T-cell (primary cell): ENCODE measurements at regions of chr1 and their contacts with region 1.

Region 1: DNA sequence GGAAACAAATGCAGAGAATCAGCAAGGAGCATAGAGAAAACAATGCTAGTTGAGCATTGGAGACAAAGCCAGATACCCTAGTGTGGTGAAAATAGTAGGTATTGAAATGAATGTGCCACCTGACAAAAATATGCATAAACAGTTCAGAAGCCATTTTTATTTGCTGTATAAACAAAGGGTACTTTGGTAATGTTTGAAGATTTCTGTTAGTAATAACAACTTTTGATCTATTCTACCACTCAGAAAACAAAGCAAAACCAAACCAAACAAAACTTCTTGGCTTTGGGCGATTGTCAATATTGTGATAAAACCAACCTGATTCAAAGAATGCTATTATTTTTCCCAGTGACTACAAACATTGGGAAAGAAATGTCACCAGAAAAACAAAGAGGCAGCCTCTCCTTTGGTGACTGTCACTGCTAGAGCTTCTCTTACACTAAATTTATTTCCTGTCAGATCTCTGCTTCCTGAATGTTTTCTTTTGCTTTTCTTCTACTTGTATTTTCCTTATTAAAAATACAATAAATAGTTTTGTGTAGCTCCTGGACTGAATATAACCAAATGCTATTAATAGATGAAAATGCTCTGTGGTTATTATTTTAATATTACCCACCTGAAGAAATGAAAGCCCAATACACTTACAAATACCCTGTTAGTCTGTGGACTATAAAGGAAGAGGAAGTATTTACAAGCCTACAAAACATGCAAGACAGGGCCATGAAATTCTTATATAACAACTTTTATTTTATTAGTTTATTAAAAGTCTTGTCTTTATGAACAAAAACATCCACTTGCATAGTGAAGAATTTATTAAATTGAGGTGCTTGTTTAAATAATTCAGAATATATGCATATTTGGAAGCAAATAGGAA is 5.7 kb downstream of the ATP6V1G3 start:
- DNase-seq: no peak
- ATAC-seq: peak; percentile 40 to 67 (median 62)
- H3K4me3 ChIP-seq: no peak overlapping the region
- H3K4me3 Mint-ChIP-seq: peak overlapping the region; percentile 45 to 59 (median 55)
- H3K27ac ChIP-seq: peak overlapping the region; percentile 70
- H3K27ac Mint-ChIP-seq: peak overlapping the region; percentile 86 to 97
- H3K4me1 ChIP-seq: peaks cover 8 to 57% of the 10 kb centered on the region in 2 experiments
- H3K4me1 Mint-ChIP-seq: peaks cover 76 to 95% (median 78%) of the 10 kb centered on the region in 3 donors
- H3K27me3 ChIP-seq: no peaks in the 10 kb centered on the region
- H3K27me3 Mint-ChIP-seq: no peaks in the 10 kb centered on the region

Region 2: GRCh38 chr1:198373376-198373775 is 161.4 kb before region 1 on chr1:
- CTCF ChIA-PET with region 1: no interaction called
- POLR2A ChIA-PET with region 1: no interaction called
- DNase-seq: no peak
- ATAC-seq: no peak
- H3K4me3 ChIP-seq: no peak overlapping the region
- H3K4me3 Mint-ChIP-seq: no peak overlapping the region
- H3K27ac ChIP-seq: no peak overlapping the region
- H3K27ac Mint-ChIP-seq: no peak overlapping the region
- H3K4me1 ChIP-seq: no peaks in the 10 kb centered on the region
- H3K4me1 Mint-ChIP-seq: peaks cover 0 to 4% (median 0%) of the 10 kb centered on the region in 3 donors
- H3K27me3 ChIP-seq: no peaks in the 10 kb centered on the region
- H3K27me3 Mint-ChIP-seq: peaks cover 0 to 3% of the 10 kb centered on the region in 2 donors

Region 3: GRCh38 chr1:198520524-198521254 is 14.1 kb before region 1 on chr1:
- CTCF ChIA-PET with region 1: interaction called in 1 of 2 experiments, 10 read pairs
- POLR2A ChIA-PET with region 1: interaction called in 1 of 2 experiments, 3 read pairs
- DNase-seq: peak in 2 of 35 experiments; percentile 3 to 56
- ATAC-seq: peak; percentile 50 to 77 (median 74)
- H3K4me3 ChIP-seq: peak overlapping the region; percentile 15 to 34
- H3K4me3 Mint-ChIP-seq: peak overlapping the region; percentile 55 to 69 (median 68)
- H3K27ac ChIP-seq: peak overlapping the region; percentile 79
- H3K27ac Mint-ChIP-seq: peak overlapping the region; percentile 90
- H3K4me1 ChIP-seq: peaks cover 23 to 49% of the 10 kb centered on the region in 2 experiments
- H3K4me1 Mint-ChIP-seq: peaks cover 67 to 81% (median 70%) of the 10 kb centered on the region in 3 donors
- H3K27me3 ChIP-seq: no peaks in the 10 kb centered on the region
- H3K27me3 Mint-ChIP-seq: no peaks in the 10 kb centered on the region